ENCODE measurements at regions of chr17 and their contacts with region 1.

Region 1: DNA sequence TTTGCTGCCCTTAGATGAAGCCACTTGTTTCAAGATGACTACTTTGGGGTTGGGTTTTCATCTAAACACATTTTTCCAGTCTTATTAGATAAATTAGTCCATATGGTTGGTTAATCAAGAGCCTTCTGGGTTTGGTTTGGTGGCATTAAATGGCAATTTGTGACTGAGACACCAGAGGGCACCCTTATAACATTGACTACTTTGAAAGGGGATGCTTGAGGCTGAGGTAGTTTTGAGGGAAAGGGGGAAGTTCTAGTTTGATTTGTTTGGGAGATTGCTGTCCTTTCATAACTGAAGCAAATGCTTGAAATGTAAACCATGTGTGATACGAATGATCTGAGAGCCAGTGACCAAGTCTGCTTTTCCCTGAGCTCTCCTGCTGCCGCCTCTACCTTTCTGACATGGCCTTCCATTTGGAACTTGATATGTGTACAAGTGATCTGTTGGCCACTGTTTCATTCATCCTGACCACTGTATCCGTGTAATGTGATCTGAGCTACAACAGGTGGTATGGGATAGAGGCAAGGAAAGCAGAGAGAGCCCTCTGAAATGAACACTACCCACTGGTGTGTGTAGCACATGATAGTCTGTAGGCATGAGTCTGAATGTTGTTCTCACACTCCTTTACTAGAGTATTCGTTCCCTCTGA is 5.8 kb upstream of the RARA start:
- H3K4me3 Mint-ChIP-seq: no peak overlapping the region
- H3K27ac Mint-ChIP-seq: no peak overlapping the region
- H3K4me1 Mint-ChIP-seq: peaks cover 17% of the 10 kb centered on the region
- H3K27me3 Mint-ChIP-seq: no peaks in the 10 kb centered on the region

Region 2: GRCh38 chr17:40345161-40345993 is 42.2 kb after region 1 on chr17:
- intact Hi-C with region 1: loop called (anchors 2 kb)
- H3K4me3 Mint-ChIP-seq: peak overlapping the region; percentile 76
- H3K27ac Mint-ChIP-seq: peak overlapping the region; percentile 91
- H3K4me1 Mint-ChIP-seq: peaks cover 90% of the 10 kb centered on the region
- H3K27me3 Mint-ChIP-seq: no peaks in the 10 kb centered on the region

Region 3: GRCh38 chr17:40417609-40418427 is 114.7 kb after region 1 on chr17 and contains the start of gene TOP2A:
- intact Hi-C with region 1: loop called (anchors 1 kb)
- H3K4me3 Mint-ChIP-seq: peak within 1 kb of the TSS; percentile 97
- H3K27ac Mint-ChIP-seq: peak within 1 kb of the TSS; percentile 73
- H3K4me1 Mint-ChIP-seq: peaks cover 20% of the 10 kb centered on the region
- H3K27me3 Mint-ChIP-seq: no peaks in the 10 kb centered on the region